Psoas muscle (tissue), 8 donors: ENCODE measurements at regions of chr19 and their contacts with region 1.

Region 1: GRCh38 chr19:54023191-54023590 is 31.8 kb downstream of the CACNG6 start:
- DNase-seq: no peak
- ATAC-seq: no peak
- H3K4me3 ChIP-seq: no peak overlapping the region
- H3K27ac ChIP-seq: no peak overlapping the region
- H3K4me1 ChIP-seq: no peaks in the 10 kb centered on the region
- H3K27me3 ChIP-seq: peaks cover 0 to 11% (median 2%) of the 10 kb centered on the region in 3 donors
- CTCF ChIP-seq: no peak

Region 2: GRCh38 chr19:53844849-53845246 is 178.3 kb before region 1 on chr19:
- intact Hi-C with region 1: loop called in 1 of 2 experiments (anchors 2 kb)
- DNase-seq: no peak
- ATAC-seq: no peak
- H3K4me3 ChIP-seq: no peak overlapping the region
- H3K27ac ChIP-seq: no peak overlapping the region
- H3K4me1 ChIP-seq: no peaks in the 10 kb centered on the region
- H3K27me3 ChIP-seq: no peaks in the 10 kb centered on the region
- CTCF ChIP-seq: no peak

Region 3: GRCh38 chr19:53906211-53907192 is 116.7 kb before region 1 on chr19:
- intact Hi-C with region 1: loop called (anchors 2 kb)
- DNase-seq: peak; percentile 45 to 72
- ATAC-seq: peak; percentile 53 to 81 (median 59)
- H3K4me3 ChIP-seq: peak overlapping the region; percentile 4
- H3K27ac ChIP-seq: no peak overlapping the region
- H3K4me1 ChIP-seq: peaks cover 8% of the 10 kb centered on the region
- H3K27me3 ChIP-seq: peaks cover 0 to 58% (median 35%) of the 10 kb centered on the region in 3 donors
- CTCF ChIP-seq: peak; percentile 84

Region 4: GRCh38 chr19:53977429-53977990 is 45.7 kb before region 1 on chr19:
- intact Hi-C with region 1: loop called in 1 of 2 experiments (anchors 5 kb)
- DNase-seq: peak; percentile 73 to 79
- ATAC-seq: peak; percentile 71 to 80 (median 75)
- H3K4me3 ChIP-seq: peak overlapping the region; percentile 56
- H3K27ac ChIP-seq: peak overlapping the region; percentile 49
- H3K4me1 ChIP-seq: peaks cover 9% of the 10 kb centered on the region
- H3K27me3 ChIP-seq: peaks cover 0 to 6% (median 5%) of the 10 kb centered on the region in 3 donors
- CTCF ChIP-seq: no peak